Activated CD4-positive, alpha-beta memory T cell treated with anti-CD3 and anti-CD28 coated beads for 36 hours (primary cell): ENCODE measurements at regions of chr11 and their contacts with region 1.

Region 1: GRCh38 chr11:130314750-130315285 is at the start of gene ZBTB44:
- DNase-seq: peak; percentile 94
- H3K4me3 Mint-ChIP-seq: peak within 1 kb of the TSS; percentile 90
- H3K27ac Mint-ChIP-seq: peak within 1 kb of the TSS; percentile 97
- H3K4me1 Mint-ChIP-seq: peaks cover 32% of the 10 kb centered on the region
- H3K27me3 Mint-ChIP-seq: no peaks in the 10 kb centered on the region
- total RNA-seq, gene ZBTB44: 33.3 to 33.4 TPM

Region 2: DNA sequence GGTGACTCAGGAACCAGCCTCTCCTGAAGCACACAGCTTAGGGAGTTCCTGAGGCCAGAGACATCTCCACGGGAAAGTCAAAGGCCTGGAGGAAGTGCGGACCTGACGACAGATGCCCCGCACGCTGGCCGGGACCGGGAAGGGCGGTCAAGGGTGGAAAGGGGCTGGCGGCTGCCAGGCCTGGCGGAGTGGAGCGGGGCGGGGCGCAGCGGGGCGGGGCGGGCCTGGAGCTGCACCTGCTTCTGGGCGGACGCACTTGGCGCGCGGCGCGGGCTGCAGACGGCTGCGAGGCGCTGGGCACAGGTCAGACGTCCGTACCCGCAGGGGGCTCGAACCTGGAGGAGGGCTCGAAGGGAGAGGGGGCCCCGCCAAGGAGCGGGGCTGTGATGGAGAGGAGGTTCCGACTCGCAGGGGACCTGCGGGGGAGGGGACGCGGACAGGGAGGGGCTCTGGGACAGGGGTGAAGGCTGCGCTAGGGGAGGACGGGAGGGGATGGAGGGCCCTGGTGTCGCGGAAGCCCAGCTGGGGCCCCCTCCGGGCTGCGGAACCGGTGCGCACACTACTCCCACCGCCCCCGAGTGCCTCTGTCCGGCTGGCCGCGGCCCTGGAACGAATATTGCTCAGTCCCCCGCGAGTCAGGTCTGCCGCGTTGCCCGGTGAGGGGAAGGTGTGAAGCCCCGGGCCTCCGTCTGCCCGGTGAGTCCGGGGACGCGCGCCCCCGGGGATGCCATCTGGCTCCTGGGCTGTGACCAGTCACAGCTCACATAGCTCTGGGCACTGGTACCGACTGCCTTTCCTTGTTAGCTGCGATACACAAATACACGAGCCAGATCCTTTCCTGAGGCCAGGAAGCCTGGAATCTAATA is 499.0 kb before region 1 on chr11 and contains the start of gene TMEM45B:
- CTCF ChIA-PET with region 1: no interaction called
- POLR2A ChIA-PET with region 1: no interaction called
- intact Hi-C with region 1: loop called (anchors 10 kb)
- DNase-seq: peak; percentile 62
- H3K4me3 Mint-ChIP-seq: peak within 1 kb of the TSS; percentile 87
- H3K27ac Mint-ChIP-seq: peak within 1 kb of the TSS; percentile 78
- H3K4me1 Mint-ChIP-seq: peaks cover 54% of the 10 kb centered on the region
- H3K27me3 Mint-ChIP-seq: peaks cover 2% of the 10 kb centered on the region
- total RNA-seq, gene TMEM45B: 4.9 to 5.8 TPM

Region 3: GRCh38 chr11:130055617-130056016 is 259.2 kb before region 1 on chr11:
- CTCF ChIA-PET with region 1: no interaction called
- POLR2A ChIA-PET with region 1: no interaction called
- intact Hi-C with region 1: no loop called
- DNase-seq: no peak
- H3K4me3 Mint-ChIP-seq: no peak overlapping the region
- H3K27ac Mint-ChIP-seq: no peak overlapping the region
- H3K4me1 Mint-ChIP-seq: no peaks in the 10 kb centered on the region
- H3K27me3 Mint-ChIP-seq: peaks cover 18% of the 10 kb centered on the region

Region 4: GRCh38 chr11:130069684-130070108 is 245.1 kb before region 1 on chr11 and contains the start of gene APLP2:
- CTCF ChIA-PET with region 1: no interaction called
- POLR2A ChIA-PET with region 1: no interaction called
- intact Hi-C with region 1: loop called (anchors 1 kb)
- DNase-seq: peak; percentile 98
- H3K4me3 Mint-ChIP-seq: peak within 1 kb of the TSS; percentile 93
- H3K27ac Mint-ChIP-seq: peak within 1 kb of the TSS; percentile 87
- H3K4me1 Mint-ChIP-seq: peaks cover 16% of the 10 kb centered on the region
- H3K27me3 Mint-ChIP-seq: peaks cover 3% of the 10 kb centered on the region
- total RNA-seq, gene APLP2: 49.2 to 53.4 TPM

Region 5: GRCh38 chr11:130243816-130244215 is 71.0 kb before region 1 on chr11:
- CTCF ChIA-PET with region 1: no interaction called
- POLR2A ChIA-PET with region 1: no interaction called
- intact Hi-C with region 1: loop called (anchors 1 kb)
- DNase-seq: no peak
- H3K4me3 Mint-ChIP-seq: no peak overlapping the region
- H3K27ac Mint-ChIP-seq: no peak overlapping the region
- H3K4me1 Mint-ChIP-seq: peaks cover 21% of the 10 kb centered on the region
- H3K27me3 Mint-ChIP-seq: no peaks in the 10 kb centered on the region

Region 6: DNA sequence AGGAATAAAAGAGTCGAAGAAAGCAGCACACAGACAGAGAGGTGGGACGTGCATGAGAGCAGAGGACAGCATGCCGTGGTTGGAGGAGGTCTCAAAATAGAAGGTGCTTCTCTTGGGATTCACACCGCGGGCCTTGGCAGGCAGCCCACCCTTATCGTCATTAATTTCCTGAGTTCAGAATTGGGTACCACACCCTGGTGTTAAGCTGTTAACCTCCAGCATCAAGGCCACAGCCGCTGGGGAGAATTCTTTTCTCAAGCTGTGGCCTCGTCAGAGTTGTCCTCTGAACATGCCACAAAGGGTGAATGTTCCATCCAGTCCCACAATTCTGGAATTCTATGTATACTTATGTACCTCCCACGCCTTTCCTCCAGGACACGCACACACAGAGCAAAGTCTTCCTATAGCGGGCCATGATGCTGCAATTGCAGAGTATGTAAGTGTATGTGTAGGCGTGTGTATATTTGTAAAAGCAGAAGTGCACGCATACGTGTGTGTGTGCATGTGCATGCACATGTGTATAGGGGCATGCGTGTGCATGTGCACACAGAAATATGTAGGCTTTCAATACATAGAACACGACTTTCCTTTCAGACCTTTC is 74.6 kb after region 1 on chr11:
- CTCF ChIA-PET with region 1: no interaction called
- POLR2A ChIA-PET with region 1: no interaction called
- intact Hi-C with region 1: loop called (anchors 5 kb)
- DNase-seq: no peak
- H3K4me3 Mint-ChIP-seq: no peak overlapping the region
- H3K27ac Mint-ChIP-seq: no peak overlapping the region
- H3K4me1 Mint-ChIP-seq: peaks cover 15% of the 10 kb centered on the region
- H3K27me3 Mint-ChIP-seq: no peaks in the 10 kb centered on the region

Region 7: GRCh38 chr11:130916238-130916855 is 601.5 kb after region 1 on chr11 and contains the start of gene SNX19:
- CTCF ChIA-PET with region 1: interaction called, 3 read pairs
- POLR2A ChIA-PET with region 1: no interaction called
- intact Hi-C with region 1: loop called (anchors 2 kb)
- DNase-seq: peak; percentile 94
- H3K4me3 Mint-ChIP-seq: peak within 1 kb of the TSS; percentile 79
- H3K27ac Mint-ChIP-seq: peak within 1 kb of the TSS; percentile 58
- H3K4me1 Mint-ChIP-seq: peaks cover 34% of the 10 kb centered on the region
- H3K27me3 Mint-ChIP-seq: peaks cover 7% of the 10 kb centered on the region
- total RNA-seq, gene SNX19: 26.0 to 27.0 TPM